HAP-1 (cell line): ENCODE measurements at regions of chr10 and their contacts with region 1.

Region 1: GRCh38 chr10:78042058-78042751 is 8.5 kb downstream of the RPS24 start:
- DNase-seq: no peak
- H3K4me3 ChIP-seq: no peak overlapping the region
- H3K4me1 ChIP-seq: peaks cover 13% of the 10 kb centered on the region
- H3K27me3 ChIP-seq: no peaks in the 10 kb centered on the region

Region 2: DNA sequence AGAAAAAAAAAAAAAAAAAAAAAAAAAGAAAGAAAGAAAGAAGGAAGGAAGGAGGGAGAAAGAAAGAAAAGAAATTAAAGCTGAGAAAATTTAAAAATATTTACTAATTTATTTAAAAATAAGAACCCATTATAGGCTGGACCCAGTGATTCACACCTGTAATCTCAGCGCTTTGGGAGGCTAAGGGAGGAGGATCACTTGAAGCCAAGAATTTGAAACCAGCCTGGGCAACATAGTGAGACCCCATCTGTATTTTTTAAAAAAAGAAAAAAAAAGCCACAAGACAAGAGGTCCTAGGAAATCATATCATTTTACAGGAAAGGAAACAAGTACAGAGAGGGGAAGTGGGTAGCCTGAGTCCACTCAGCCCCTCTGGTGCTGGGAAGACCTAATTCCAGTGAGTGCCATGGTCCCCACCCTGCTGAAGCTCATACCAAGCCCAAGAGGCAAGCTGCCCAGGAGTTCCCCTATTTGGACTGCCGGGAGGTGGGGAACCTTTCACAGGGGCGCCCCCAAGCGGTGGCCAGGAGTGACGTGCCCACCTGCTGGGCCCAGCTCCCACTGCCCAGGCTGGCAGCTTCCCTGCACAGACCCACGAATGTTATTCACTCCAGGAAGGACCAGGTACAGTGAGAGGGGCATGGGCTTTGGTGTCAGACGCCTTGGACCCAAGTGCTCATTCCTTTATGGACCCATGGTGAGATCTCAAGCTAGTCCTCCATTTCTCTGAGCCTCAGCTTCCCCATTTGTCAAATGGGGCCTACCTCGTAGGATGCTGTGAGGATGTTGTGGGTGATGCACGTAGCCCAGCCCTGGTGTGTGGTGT is 1160.2 kb after region 1 on chr10:
- in situ Hi-C with region 1: loop called (anchors 5 kb)
- DNase-seq: peak; percentile 34 to 78
- H3K4me3 ChIP-seq: no peak overlapping the region
- H3K4me1 ChIP-seq: no peaks in the 10 kb centered on the region
- H3K27me3 ChIP-seq: no peaks in the 10 kb centered on the region